Activated naive CD8-positive, alpha-beta T cell treated with anti-CD3 and anti-CD28 coated beads, Interleukin-2, amount 10 ng/mL, durations not matched to agents 7 days and 5 days (primary cell): ENCODE measurements at regions of chr1 and their contacts with region 1.

Region 1: DNA sequence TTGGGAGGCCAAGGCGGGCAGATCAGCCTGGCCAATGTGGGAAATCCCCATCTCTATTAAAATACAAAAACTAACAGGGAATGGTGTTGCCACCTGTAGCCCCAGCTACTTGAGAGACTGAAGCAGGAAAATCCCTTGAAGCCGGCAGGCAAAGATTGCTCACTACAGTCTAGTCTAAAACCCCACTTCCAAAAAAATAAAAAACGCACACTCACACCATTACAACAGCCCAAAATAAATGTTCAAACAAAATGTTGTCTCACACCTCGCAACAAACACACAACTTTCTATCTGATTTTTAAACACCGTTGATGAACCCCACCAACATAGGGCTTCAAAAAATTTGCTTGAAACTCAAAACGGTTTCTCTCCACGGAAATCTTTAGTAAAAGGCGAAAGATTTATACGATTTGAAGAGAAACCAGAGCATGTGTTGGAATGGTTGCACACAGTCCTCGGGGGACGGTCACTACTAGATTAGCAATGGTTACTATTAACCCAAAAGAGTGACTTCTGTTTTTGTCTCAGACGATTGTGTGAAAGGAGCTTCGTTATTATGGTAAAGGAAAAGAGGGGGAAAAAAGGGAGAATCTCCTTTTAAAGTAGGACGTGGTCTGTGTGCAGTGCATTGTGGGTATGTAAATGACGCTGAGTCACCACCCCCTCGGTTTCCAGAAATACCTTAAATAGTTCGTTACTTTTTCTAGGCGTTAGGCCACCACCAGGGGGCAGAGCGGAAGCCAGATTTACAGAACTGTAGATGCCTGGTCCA is at the start of gene RNU5D-1:
- DNase-seq: peak; percentile 91
- ATAC-seq: peak; percentile 84
- H3K4me3 Mint-ChIP-seq: peak within 1 kb of the TSS; percentile 80
- H3K27ac Mint-ChIP-seq: peak within 1 kb of the TSS; percentile 99
- H3K4me1 Mint-ChIP-seq: peaks cover 33% of the 10 kb centered on the region
- H3K27me3 Mint-ChIP-seq: no peaks in the 10 kb centered on the region
- total RNA-seq, gene RNU5D-1: not detected

Region 2: GRCh38 chr1:44674113-44675000 is 56.6 kb before region 1 on chr1 and contains the starts of genes ARMH1 and TMEM53:
- POLR2A ChIA-PET with region 1: interaction called, 12 read pairs
- DNase-seq: peak; percentile 98
- ATAC-seq: peak; percentile 96
- H3K4me3 Mint-ChIP-seq: peak within 1 kb of the TSS; percentile 89
- H3K27ac Mint-ChIP-seq: peak within 1 kb of the TSS; percentile 82
- H3K4me1 Mint-ChIP-seq: peaks cover 18% of the 10 kb centered on the region
- H3K27me3 Mint-ChIP-seq: no peaks in the 10 kb centered on the region
- total RNA-seq, gene ARMH1: 95.7 to 105 TPM
- total RNA-seq, gene TMEM53: 4.2 to 4.7 TPM

Region 3: DNA sequence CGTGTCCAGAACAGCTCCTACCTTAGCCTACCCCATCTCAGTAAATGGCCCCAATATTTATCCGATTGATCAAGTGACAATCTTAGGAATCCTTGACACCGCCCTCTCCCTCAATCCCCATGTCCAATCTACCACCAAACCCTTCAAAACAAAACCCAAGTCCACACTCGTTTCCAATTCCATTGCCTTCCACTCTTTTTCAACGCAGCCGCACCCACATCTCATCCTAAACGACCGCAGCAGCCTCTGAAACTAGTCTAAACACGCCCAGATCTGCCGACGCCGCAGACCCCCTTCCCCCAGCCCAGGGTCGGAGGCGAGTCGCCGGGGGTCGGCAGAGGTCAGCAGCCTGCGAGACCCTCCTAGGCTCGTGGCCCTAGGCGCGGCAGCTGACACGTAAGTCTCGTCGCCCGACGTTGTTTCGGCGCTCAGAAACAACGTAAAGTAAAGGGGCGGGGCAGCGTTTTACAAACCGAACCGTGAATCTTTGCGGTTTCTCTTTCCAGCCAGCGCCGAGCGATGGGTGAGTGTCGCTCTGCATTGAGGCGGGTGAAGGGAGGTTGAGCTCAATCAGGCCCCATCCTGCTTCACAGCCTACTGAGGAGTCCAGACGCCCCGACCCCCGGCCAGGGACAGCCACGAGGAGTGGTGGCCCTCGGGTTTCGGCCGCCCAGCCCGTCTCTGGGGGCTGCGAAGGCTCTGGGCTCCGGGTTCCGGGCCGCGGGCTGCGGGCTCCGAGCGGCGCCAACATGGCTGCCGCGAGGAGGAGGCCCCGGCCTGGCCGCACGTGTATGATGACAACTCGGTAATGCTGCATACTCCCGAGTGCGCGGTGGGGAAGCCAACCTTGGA is 44.4 kb after region 1 on chr1 and contains the start of gene RPS8:
- POLR2A ChIA-PET with region 1: interaction called, 53 read pairs
- DNase-seq: peak; percentile 86
- ATAC-seq: peak; percentile 80
- H3K4me3 Mint-ChIP-seq: peak within 1 kb of the TSS; percentile 91
- H3K27ac Mint-ChIP-seq: peak within 1 kb of the TSS; percentile 96
- H3K4me1 Mint-ChIP-seq: peaks cover 24% of the 10 kb centered on the region
- H3K27me3 Mint-ChIP-seq: no peaks in the 10 kb centered on the region
- total RNA-seq, gene RPS8: 1,522 to 1,548 TPM

Region 4: DNA sequence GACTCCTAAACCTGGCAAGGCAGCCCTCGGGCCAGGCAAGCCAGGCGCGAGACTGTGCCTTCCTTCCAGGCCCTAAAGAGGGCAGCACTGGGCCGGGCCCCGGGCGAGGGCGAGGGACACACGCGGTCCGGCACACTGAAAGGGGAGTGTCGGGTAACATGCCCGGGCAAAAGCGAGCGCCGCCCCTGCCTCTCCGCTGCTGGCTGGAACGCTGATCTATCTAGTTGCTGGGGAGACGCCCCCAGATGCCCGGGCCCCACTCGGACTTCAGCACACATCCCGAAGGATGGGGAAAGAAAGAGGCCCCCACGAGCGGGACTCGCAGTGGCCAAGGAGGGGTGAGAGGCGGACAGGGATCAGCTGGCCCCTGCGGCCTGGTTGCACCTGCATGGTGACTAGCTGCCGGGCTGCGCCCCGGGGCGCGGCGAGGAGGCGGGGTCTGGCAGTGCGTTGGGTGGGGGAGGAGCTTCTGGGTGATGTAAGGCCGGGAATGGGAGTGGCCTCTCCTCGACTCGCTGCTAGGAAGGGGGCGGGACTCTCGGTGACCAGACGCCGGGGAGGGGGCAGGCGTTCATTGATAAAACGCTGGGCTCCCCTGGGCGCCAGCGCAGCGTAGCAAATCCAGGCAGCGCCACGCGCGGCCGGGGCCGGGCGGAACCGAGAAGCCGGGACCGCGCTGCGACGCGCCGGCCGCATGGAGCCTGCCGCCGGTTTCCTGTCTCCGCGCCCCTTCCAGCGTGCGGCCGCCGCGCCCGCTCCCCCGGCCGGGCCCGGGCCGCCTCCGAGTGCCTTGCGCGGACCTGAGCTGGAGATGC is 69.0 kb after region 1 on chr1 and contains the start of gene PLK3:
- POLR2A ChIA-PET with region 1: interaction called, 39 read pairs
- DNase-seq: peak; percentile 96
- ATAC-seq: peak; percentile 77
- H3K4me3 Mint-ChIP-seq: peak within 1 kb of the TSS; percentile 92
- H3K27ac Mint-ChIP-seq: peak within 1 kb of the TSS; percentile 97
- H3K4me1 Mint-ChIP-seq: peaks cover 24% of the 10 kb centered on the region
- H3K27me3 Mint-ChIP-seq: no peaks in the 10 kb centered on the region
- total RNA-seq, gene PLK3: 68.8 to 70.7 TPM

Region 5: DNA sequence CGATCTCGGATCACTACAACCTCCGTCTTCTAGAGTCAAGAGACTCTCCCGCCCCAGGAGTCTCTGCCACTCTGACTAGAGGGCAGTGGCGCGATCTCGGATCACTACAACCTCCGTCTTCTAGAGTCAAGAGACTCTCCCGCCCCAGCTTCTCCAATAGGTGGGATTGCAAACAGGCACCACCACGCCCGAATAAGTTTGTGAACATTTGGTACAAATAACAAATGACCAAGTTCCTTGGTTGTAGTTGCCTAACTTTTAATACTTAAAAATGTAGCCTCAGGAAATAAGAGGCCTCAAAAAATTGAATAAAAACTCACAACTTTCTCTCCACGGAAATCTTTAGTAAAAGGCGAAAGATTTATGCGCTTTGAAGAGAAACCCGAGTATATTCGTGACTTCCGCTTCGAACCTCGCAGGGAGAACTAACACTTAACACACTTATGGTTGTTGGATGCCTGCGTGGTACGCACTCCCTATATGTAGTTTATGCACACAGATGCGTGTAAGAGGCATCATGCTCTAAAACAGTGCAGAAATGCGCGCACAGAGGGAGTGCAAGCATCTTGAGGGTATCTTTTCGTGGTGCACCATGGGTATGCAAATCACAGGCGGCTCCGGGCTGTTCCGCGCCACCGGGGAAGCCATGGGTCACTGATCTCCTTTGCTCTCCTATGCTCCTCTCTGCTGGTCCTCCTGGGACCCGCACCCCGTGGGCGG is 88.8 kb after region 1 on chr1:
- POLR2A ChIA-PET with region 1: interaction called, 130 read pairs
- DNase-seq: peak; percentile 84
- ATAC-seq: peak; percentile 88
- H3K4me3 Mint-ChIP-seq: peak overlapping the region; percentile 92
- H3K27ac Mint-ChIP-seq: peak overlapping the region; percentile 99
- H3K4me1 Mint-ChIP-seq: peaks cover 36% of the 10 kb centered on the region
- H3K27me3 Mint-ChIP-seq: no peaks in the 10 kb centered on the region

Region 6: GRCh38 chr1:45339789-45340570 is 609.1 kb after region 1 on chr1 and contains the starts of genes MUTYH and TOE1:
- POLR2A ChIA-PET with region 1: interaction called, 13 read pairs
- DNase-seq: peak; percentile 96
- ATAC-seq: peak; percentile 87
- H3K4me3 Mint-ChIP-seq: peak within 1 kb of the TSS; percentile 98
- H3K27ac Mint-ChIP-seq: peak within 1 kb of the TSS; percentile 98
- H3K4me1 Mint-ChIP-seq: peaks cover 35% of the 10 kb centered on the region
- H3K27me3 Mint-ChIP-seq: no peaks in the 10 kb centered on the region
- total RNA-seq, gene MUTYH: 59.9 to 68.8 TPM
- total RNA-seq, gene TOE1: 20.4 to 22.2 TPM